Activated T-helper 1 cell treated with anti-CD3 and anti-CD28 coated beads, Interleukin-12 subunit alpha, Interleukin-12 subunit beta, Interleukin-2, Interleukin-4 antibody, amounts not matched to agents 30 ng/mL and 10 ng/mL and 1 ng/mL, durations not matched to agents 14 hours and 24 hours and 36 hours (primary cell): ENCODE measurements at regions of chr2 and their contacts with region 1.

Region 1: DNA sequence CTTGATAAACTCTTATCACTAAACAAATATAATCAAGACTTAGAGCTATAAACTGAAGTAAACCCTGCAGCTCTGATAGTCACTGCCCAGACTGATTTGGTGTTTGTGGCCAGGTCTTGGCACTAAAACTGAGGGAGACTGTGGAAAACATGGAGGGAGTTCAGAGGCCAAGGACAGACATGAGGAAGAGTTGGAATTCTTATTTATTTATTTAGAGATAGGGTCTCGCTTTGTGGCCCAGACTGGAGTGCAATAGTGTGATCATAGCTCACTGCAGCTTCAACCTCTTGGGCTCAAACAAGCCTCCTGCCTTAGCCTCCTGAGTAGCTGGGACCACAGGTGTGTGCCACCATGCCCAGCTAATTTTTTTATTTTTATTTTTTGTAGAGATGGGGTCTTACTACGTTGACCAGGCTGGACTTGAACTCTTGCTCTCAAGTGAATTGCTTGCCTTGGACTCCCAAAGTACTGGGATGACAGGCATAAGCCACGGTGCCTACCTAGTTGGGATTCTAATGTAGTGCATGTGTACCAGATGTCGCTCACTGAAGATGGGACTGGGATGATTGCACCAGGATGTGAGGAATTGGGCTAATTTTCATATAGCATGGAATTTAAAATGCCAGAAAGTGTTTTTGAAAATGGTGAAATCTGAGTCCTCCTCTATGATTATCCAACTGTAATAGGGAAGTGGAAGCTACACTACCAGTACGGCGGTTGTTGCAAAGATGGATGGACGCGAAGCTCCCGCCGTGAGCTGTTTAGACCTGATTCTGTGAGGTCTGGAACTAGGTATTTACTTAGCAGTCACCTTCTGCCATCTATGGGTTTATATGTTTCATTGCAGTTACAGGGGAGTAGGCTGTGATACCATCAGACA is 52.7 kb upstream of the CTLA4 start:
- DNase-seq: no peak
- H3K4me3 Mint-ChIP-seq: peak overlapping the region; percentile 24
- H3K27ac Mint-ChIP-seq: peak overlapping the region; percentile 37
- H3K4me1 Mint-ChIP-seq: peaks cover 62% of the 10 kb centered on the region
- H3K27me3 Mint-ChIP-seq: peaks cover 6% of the 10 kb centered on the region

Region 2: DNA sequence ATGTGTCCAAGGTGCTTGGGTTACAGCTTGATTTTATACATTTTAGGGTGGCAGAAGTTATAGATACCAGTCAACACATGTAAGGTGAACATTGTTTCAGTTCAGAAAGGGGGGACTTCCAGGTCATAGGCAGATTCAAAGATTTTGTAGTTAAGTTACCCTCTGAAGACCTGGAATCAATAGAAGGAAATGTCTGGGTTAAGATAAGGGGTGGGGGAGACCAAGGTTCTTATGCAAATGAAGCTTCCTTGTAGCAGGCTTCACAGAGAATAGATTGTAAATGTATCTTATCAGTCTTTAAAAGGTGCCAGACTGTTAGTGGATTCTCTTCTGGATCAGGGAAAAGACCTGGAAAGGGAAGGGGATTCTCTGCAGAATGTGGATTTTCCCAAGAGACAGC is 1396.4 kb before region 1 on chr2:
- intact Hi-C with region 1: no loop called
- DNase-seq: no peak
- H3K4me3 Mint-ChIP-seq: no peak overlapping the region
- H3K27ac Mint-ChIP-seq: no peak overlapping the region
- H3K4me1 Mint-ChIP-seq: no peaks in the 10 kb centered on the region
- H3K27me3 Mint-ChIP-seq: no peaks in the 10 kb centered on the region

Region 3: GRCh38 chr2:203014456-203015199 is 800.3 kb before region 1 on chr2 and contains the start of gene NBEAL1:
- intact Hi-C with region 1: loop called (anchors 10 kb)
- DNase-seq: peak; percentile 97
- H3K4me3 Mint-ChIP-seq: peak within 1 kb of the TSS; percentile 94
- H3K27ac Mint-ChIP-seq: peak within 1 kb of the TSS; percentile 87
- H3K4me1 Mint-ChIP-seq: peaks cover 31% of the 10 kb centered on the region
- H3K27me3 Mint-ChIP-seq: peaks cover 4% of the 10 kb centered on the region
- total RNA-seq, gene NBEAL1: 9.2 and 10.7 TPM in 2 replicates

Region 4: GRCh38 chr2:203484266-203485112 is 330.4 kb before region 1 on chr2:
- intact Hi-C with region 1: loop called (anchors 1 kb)
- DNase-seq: peak; percentile 30
- H3K4me3 Mint-ChIP-seq: no peak overlapping the region
- H3K27ac Mint-ChIP-seq: no peak overlapping the region
- H3K4me1 Mint-ChIP-seq: peaks cover 6% of the 10 kb centered on the region
- H3K27me3 Mint-ChIP-seq: no peaks in the 10 kb centered on the region

Region 5: GRCh38 chr2:203673933-203674332 is 141.0 kb before region 1 on chr2:
- intact Hi-C with region 1: loop called (anchors 1 kb)
- DNase-seq: peak; percentile 49
- H3K4me3 Mint-ChIP-seq: peak overlapping the region; percentile 61
- H3K27ac Mint-ChIP-seq: peak overlapping the region; percentile 90
- H3K4me1 Mint-ChIP-seq: peaks cover 33% of the 10 kb centered on the region
- H3K27me3 Mint-ChIP-seq: no peaks in the 10 kb centered on the region

Region 6: DNA sequence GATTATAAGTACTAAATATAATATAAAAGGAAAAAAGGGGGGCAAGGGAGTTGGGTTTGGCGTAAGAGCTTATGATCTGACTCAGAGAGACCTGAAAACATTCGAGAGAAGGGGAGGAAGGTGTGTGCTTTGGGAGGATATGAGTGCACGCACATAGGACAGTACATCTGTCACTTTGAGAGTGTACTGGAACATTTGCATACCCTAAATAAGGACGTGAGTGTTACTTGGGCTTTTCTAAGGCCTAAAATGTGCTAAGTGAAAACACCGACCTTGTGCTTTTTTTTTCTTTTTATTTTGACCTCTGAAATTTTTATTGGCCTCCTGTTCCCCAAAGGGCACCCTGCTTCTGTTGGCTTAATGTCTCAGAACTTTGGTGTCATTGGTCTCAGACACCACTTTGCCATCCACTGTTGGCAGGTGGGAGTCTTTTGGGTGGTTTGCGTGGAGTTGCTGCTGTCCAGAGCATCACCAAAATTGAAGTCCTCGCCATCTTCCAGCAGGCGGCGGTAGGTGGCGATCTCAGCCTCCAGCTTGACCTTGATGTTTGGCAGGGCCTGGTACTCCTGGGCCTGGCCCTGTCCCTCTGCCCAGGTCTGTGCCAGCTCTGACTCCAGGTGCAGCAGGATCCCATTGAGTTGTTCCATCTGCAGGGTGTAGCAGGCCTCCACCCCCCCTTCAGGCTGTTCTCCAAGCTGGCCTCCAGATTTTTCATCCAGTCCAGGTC is 50.8 kb before region 1 on chr2:
- intact Hi-C with region 1: loop called (anchors 1 kb)
- DNase-seq: peak; percentile 20
- H3K4me3 Mint-ChIP-seq: peak overlapping the region; percentile 22
- H3K27ac Mint-ChIP-seq: peak overlapping the region; percentile 95
- H3K4me1 Mint-ChIP-seq: peaks cover 66% of the 10 kb centered on the region
- H3K27me3 Mint-ChIP-seq: no peaks in the 10 kb centered on the region

Region 7: GRCh38 chr2:203878063-203878462 is 63.2 kb after region 1 on chr2:
- intact Hi-C with region 1: no loop called
- DNase-seq: no peak
- H3K4me3 Mint-ChIP-seq: no peak overlapping the region
- H3K27ac Mint-ChIP-seq: no peak overlapping the region
- H3K4me1 Mint-ChIP-seq: peaks cover 38% of the 10 kb centered on the region
- H3K27me3 Mint-ChIP-seq: no peaks in the 10 kb centered on the region

Region 8: DNA sequence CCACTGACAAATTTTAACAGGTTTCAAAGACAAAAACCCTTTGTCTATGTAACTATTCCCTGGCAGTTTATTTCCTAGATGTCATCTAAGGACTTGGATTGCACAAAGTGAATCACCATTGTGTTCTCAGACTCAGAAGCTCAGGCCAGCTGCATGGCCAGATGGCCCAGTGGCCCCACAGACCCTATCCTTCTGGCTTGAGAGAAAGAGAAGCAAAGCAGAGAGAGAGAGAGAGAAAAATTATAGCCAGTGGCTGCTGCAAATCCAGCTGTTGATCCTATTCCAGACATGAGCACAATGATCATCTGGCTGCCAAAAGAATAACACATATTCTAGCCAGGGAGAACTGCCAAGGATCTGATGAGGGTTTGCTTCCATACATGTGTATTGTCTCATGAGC is 78.5 kb after region 1 on chr2:
- intact Hi-C with region 1: loop called (anchors 1 kb)
- DNase-seq: no peak
- H3K4me3 Mint-ChIP-seq: no peak overlapping the region
- H3K27ac Mint-ChIP-seq: peak overlapping the region; percentile 89
- H3K4me1 Mint-ChIP-seq: peaks cover 73% of the 10 kb centered on the region
- H3K27me3 Mint-ChIP-seq: no peaks in the 10 kb centered on the region